IMR-90 (cell line): ENCODE measurements at regions of chr11 and their contacts with region 1.

Region 1: GRCh38 chr11:109697140-109697843 is 275.3 kb downstream of the C11orf87 start:
- DNase-seq: peak; percentile 50
- ATAC-seq: peak; percentile 98
- H3K4me3 ChIP-seq: no peak overlapping the region
- H3K27ac ChIP-seq: no peak overlapping the region
- H3K4me1 ChIP-seq: no peaks in the 10 kb centered on the region
- H3K27me3 ChIP-seq: no peaks in the 10 kb centered on the region; the same call in 1 of the 2 replicates
- CTCF ChIP-seq: peak; percentile 72
- POLR2A ChIP-seq: no peak
- RAD21 ChIP-seq: peak; percentile 74

Region 2: GRCh38 chr11:108703916-108704315 is 993.4 kb before region 1 on chr11:
- CTCF ChIA-PET with region 1: no interaction called
- POLR2A ChIA-PET with region 1: no interaction called
- dilution Hi-C with region 1: no loop called
- in situ Hi-C with region 1: loop called (anchors 10 kb)
- intact Hi-C with region 1: no loop called
- DNase-seq: no peak
- ATAC-seq: no peak
- H3K4me3 ChIP-seq: no peak overlapping the region
- H3K27ac ChIP-seq: no peak overlapping the region
- H3K4me1 ChIP-seq: peaks cover 3% of the 10 kb centered on the region; the same call in 1 of the 2 replicates
- H3K27me3 ChIP-seq: no peaks in the 10 kb centered on the region
- CTCF ChIP-seq: no peak
- POLR2A ChIP-seq: no peak
- RAD21 ChIP-seq: no peak

Region 3: GRCh38 chr11:109422870-109423465 is 274.3 kb before region 1 on chr11:
- CTCF ChIA-PET with region 1: no interaction called
- POLR2A ChIA-PET with region 1: no interaction called
- dilution Hi-C with region 1: no loop called
- in situ Hi-C with region 1: no loop called
- intact Hi-C with region 1: loop called (anchors 2 kb)
- DNase-seq: no peak
- ATAC-seq: peak; percentile 57
- H3K4me3 ChIP-seq: peak overlapping the region; percentile 40
- H3K27ac ChIP-seq: no peak overlapping the region
- H3K4me1 ChIP-seq: peaks cover 4% of the 10 kb centered on the region
- H3K27me3 ChIP-seq: peaks cover 11% of the 10 kb centered on the region; the same call in 1 of the 2 replicates
- CTCF ChIP-seq: no peak
- POLR2A ChIP-seq: no peak
- RAD21 ChIP-seq: no peak